Psoas muscle (tissue), 8 donors: ENCODE measurements at regions of chr6 and their contacts with region 1.

Region 1: GRCh38 chr6:168884646-168885086 is 369.0 kb downstream of the THBS2 start:
- DNase-seq: peak; percentile 70 to 83
- ATAC-seq: peak; percentile 77 to 94 (median 82)
- H3K4me3 ChIP-seq: peak overlapping the region; percentile 51
- H3K27ac ChIP-seq: no peak overlapping the region
- H3K4me1 ChIP-seq: no peaks in the 10 kb centered on the region
- H3K27me3 ChIP-seq: peaks cover 0 to 5% (median 2%) of the 10 kb centered on the region in 3 donors
- CTCF ChIP-seq: peak; percentile 91

Region 2: DNA sequence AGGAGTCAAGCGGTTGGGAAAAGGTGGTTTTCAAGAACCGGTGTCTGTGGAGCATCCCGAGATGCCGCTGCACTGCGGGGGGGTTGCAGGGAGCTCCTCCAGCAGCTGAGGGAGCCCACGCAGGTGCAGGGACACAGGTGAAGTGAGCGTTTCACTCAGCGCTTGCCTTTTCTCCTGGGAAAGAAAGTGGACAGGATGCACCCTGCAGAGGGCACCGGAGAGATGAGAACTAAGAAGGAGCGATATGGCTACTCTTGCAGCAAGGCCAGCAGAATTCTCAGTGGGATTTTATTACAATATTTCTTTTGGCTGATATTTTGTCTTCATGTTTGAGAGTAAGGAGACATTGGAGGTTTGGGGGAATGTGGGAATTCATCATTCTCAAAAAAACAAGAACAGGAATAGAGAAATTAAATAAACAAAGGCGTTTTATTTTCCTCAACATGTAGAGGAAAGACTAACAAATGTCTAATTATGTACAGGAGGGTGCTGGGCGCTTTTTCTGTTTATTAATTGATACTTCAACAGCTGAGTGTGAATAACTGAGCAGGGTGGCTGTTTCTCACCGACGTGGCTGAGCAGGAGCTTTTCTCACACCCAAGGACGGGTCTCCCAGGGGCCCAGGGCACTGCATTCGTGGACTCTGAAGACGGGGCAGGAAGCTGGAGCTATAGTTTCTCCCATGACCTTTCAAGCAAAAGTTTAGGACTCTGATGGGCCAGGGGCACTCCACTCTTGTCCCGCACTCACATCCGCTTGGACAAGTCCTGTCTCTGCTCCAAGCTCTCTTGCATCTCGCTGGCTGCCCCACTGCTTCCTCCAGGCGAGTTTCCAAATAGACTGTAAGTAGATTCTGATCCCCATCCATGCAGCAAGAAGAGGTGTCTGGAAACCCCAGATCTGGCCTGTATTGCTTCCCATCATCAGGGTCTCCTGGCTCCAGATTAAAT is 267.6 kb before region 1 on chr6:
- intact Hi-C with region 1: loop called in 1 of 2 experiments (anchors 10 kb)
- DNase-seq: no peak
- ATAC-seq: peak in 1 of 4 donors; percentile 29
- H3K4me3 ChIP-seq: no peak overlapping the region
- H3K27ac ChIP-seq: no peak overlapping the region
- H3K4me1 ChIP-seq: no peaks in the 10 kb centered on the region
- H3K27me3 ChIP-seq: peaks cover 0 to 2% (median 0%) of the 10 kb centered on the region in 3 donors
- CTCF ChIP-seq: peak; percentile 10